ENCODE measurements at regions of chr7 and their contacts with region 1.

Region 1: GRCh38 chr7:74429153-74429747 is 24.5 kb upstream of the GTF2IRD1 start:
- DNase-seq: peak; percentile 53
- H3K4me3 ChIP-seq: no peak overlapping the region
- CTCF ChIP-seq: no peak

Region 2: GRCh38 chr7:74101061-74101681 is 328.1 kb before region 1 on chr7:
- CTCF ChIA-PET with region 1: no interaction called
- POLR2A ChIA-PET with region 1: no interaction called
- DNase-seq: no peak
- H3K4me3 ChIP-seq: no peak overlapping the region
- CTCF ChIP-seq: no peak

Region 3: GRCh38 chr7:74412056-74412455 is 17.2 kb before region 1 on chr7:
- CTCF ChIA-PET with region 1: interaction called, 17 read pairs
- POLR2A ChIA-PET with region 1: no interaction called
- DNase-seq: no peak
- H3K4me3 ChIP-seq: no peak overlapping the region
- CTCF ChIP-seq: no peak